ENCODE measurements at regions of chr6 and their contacts with region 1.

Region 1: DNA sequence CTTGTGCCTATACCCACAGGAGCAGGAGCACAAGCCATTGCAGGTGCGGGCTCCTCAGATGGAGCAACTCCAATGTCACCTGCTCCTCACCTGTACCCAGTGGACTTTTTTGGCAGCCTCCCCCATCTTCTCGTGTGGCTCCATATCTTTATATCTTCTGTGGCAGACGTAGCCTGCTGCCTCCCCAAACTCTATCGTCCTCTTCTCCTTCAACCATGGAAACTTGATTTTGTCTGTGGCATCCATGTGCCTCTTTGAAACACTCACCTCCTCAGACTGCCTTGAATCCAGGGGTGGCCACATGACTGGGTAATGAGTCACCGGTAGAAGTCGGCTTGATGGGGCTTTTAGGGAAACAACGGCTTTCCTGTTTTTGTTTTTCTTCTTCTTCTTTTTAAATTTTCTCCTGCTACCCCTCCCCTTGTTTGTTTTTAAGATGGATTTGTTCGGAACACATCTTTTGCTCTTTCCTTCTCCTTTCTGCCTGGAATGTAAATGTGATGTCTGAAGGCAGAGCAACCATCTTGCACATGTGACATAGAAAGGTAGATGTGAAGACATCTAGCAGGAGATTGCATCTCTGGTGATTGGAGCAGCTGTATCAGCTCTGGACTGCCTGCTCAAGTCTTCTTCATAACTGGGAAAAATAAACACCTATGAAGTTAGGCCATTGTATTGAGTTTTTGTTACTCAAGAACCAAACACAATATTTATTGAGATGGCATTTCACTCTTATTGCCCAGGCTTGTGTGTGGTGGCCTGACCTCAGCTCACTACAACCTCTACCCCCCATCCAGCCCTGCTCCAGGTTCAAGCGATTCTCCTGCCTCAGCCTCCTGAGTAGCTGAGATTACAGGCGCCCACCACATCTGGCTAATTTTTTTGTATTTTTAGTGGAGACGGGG is 69.9 kb upstream of the DDR1 start:
- DNase-seq: peak; percentile 81
- H3K4me3 Mint-ChIP-seq: peak overlapping the region; percentile 48
- H3K27ac Mint-ChIP-seq: peak overlapping the region; percentile 95
- H3K4me1 Mint-ChIP-seq: peaks cover 94% of the 10 kb centered on the region
- H3K27me3 Mint-ChIP-seq: no peaks in the 10 kb centered on the region

Region 2: GRCh38 chr6:30678964-30679726 is 135.2 kb before region 1 on chr6:
- CTCF ChIA-PET with region 1: no interaction called
- intact Hi-C with region 1: loop called (anchors 1 kb)
- DNase-seq: peak; percentile 95
- H3K4me3 Mint-ChIP-seq: peak overlapping the region; percentile 96
- H3K27ac Mint-ChIP-seq: peak overlapping the region; percentile 100
- H3K4me1 Mint-ChIP-seq: peaks cover 21% of the 10 kb centered on the region
- H3K27me3 Mint-ChIP-seq: no peaks in the 10 kb centered on the region

Region 3: GRCh38 chr6:30742316-30743098 is 71.9 kb before region 1 on chr6 and contains the start of gene FLOT1:
- CTCF ChIA-PET with region 1: interaction called, 23 read pairs
- intact Hi-C with region 1: loop called (anchors 1 kb)
- DNase-seq: peak; percentile 96
- H3K4me3 Mint-ChIP-seq: peak within 1 kb of the TSS; percentile 94
- H3K27ac Mint-ChIP-seq: peak within 1 kb of the TSS; percentile 96
- H3K4me1 Mint-ChIP-seq: peaks cover 61% of the 10 kb centered on the region
- H3K27me3 Mint-ChIP-seq: no peaks in the 10 kb centered on the region
- total RNA-seq, gene FLOT1: 162 to 173 TPM

Region 4: GRCh38 chr6:30793521-30794194 is 20.7 kb before region 1 on chr6:
- CTCF ChIA-PET with region 1: interaction called, 7 read pairs
- intact Hi-C with region 1: loop called (anchors 1 kb)
- DNase-seq: no peak
- H3K4me3 Mint-ChIP-seq: peak overlapping the region; percentile 60
- H3K27ac Mint-ChIP-seq: peak overlapping the region; percentile 89
- H3K4me1 Mint-ChIP-seq: peaks cover 52% of the 10 kb centered on the region
- H3K27me3 Mint-ChIP-seq: no peaks in the 10 kb centered on the region